ENCODE measurements at regions of chr11 and their contacts with region 1.

Region 1: GRCh38 chr11:103927535-103927934 is 108.9 kb upstream of the DDI1 start:
- ATAC-seq: peak in 4 of 8 experiments; percentile 21 to 62 (median 56)
- H3K4me3 ChIP-seq: no peak overlapping the region
- H3K27ac ChIP-seq: no peak overlapping the region
- H3K4me1 ChIP-seq: peaks cover 10 to 21% of the 10 kb centered on the region in 2 donors

Region 2: DNA sequence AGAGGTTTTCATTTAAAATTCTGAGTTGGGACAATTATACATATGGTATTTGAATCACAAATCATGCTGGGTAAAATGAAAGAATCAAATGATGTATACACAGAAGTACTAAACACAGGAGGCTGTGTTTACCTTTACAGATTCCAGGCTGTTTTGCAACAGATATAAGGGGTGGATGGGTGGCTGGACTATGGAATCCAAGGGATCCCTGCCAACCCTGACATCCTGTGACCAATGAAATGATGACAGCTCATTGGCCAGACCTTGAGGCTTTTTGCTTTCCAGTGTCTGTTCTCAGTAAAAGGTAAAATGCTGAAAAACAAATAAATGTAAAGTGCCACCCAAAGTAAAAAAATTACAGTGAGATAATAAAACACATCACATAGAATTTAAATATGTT is 105.6 kb after region 1 on chr11:
- in situ Hi-C with region 1: no loop called
- ATAC-seq: peak in 4 of 8 experiments; percentile 30 to 52 (median 32)
- H3K4me3 ChIP-seq: no peak overlapping the region
- H3K27ac ChIP-seq: no peak overlapping the region
- H3K4me1 ChIP-seq: no peaks in the 10 kb centered on the region

Region 3: DNA sequence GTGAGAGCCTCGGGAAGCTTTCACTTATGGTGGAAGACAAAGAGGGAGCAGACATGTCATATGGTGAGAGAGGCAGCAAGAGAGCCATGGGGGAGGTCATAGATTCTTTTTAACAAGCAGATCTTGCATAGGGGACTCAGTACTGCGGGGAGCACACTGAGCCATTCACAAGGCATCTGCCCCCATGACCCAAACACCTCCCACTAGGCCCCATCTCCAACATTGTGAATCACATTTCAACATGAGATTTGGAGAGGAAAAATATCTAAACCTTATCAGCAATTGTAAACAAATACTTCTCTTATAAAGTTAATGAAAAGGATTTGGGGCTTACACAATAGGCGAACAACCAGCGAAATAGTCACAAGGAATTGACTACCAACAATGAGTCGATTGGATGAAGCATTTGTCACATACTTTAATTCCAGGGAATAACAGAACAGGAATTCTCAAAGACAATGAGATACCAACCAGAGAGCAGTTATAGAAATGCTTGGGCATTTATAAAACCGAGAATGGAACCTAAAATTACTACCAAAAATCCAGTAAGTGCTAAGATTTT is 116.2 kb after region 1 on chr11:
- in situ Hi-C with region 1: no loop called
- ATAC-seq: no peak
- H3K4me3 ChIP-seq: no peak overlapping the region
- H3K27ac ChIP-seq: no peak overlapping the region
- H3K4me1 ChIP-seq: no peaks in the 10 kb centered on the region

Region 4: GRCh38 chr11:104134751-104135479 is 207.4 kb after region 1 on chr11:
- in situ Hi-C with region 1: loop called in 1 of 9 experiments (anchors 25 kb)
- ATAC-seq: peak in 2 of 8 experiments; percentile 72 to 75
- H3K4me3 ChIP-seq: no peak overlapping the region
- H3K27ac ChIP-seq: no peak overlapping the region
- H3K4me1 ChIP-seq: no peaks in the 10 kb centered on the region

Measured in motor neuron (in vitro differentiated cells).